Sigmoid colon (tissue), 7 donors: ENCODE measurements at regions of chr15 and their contacts with region 1.

Region 1: DNA sequence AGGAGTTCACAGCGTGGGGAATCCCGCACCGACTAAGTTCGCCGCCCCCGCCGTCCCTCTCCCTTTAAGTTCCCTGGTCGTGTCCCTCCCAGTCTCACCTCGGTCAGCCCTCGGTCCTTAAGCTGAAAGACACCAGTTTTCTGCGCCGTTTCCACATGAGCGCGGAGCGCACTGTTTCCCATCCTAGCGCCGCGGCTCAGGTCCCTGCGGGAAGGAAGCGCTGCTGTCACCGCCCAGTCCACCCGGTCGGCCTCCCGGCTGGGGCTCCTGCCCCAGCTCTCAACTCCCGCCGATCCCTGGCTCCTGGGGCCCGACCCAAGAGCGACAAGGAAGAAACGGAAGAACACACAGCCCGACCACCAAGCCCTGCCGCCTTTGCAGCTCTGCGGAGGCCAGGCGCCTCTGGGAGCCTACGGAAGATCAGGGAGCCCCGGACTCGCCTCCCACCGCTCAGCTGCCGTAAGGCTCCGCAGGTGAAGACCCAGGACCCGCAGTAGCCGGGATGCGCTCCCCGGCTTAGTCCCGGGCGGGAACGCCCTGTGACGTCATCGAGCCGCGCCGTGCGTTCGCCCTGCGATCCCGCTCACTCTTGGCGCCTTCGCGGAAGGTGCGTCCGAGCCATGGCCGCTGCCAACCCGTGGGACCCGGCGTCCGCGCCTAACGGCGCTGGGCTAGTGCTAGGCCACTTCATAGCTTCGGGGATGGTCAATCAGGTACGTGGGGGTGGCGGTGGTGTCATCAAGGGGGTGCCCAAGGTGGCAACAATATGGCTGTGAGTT is at the starts of genes HAUS2 and LRRC57:
- DNase-seq: peak; percentile 93
- H3K4me3 ChIP-seq: peak within 1 kb of the TSS; percentile 72 to 94 (median 80)
- H3K27ac ChIP-seq: peak within 1 kb of the TSS; percentile 89 to 97 (median 92)
- H3K4me1 ChIP-seq: peaks cover 0 to 26% (median 24%) of the 10 kb centered on the region in 4 donors
- H3K27me3 ChIP-seq: no peaks in the 10 kb centered on the region
- CTCF ChIP-seq: no peak
- EP300 ChIP-seq: no peak
- POLR2A ChIP-seq: peak; percentile 84 to 91
- total RNA-seq, gene HAUS2: 18.3 to 24.6 (median 20.1) TPM
- total RNA-seq, gene LRRC57: 9.2 to 24.6 (median 11.4) TPM

Region 2: DNA sequence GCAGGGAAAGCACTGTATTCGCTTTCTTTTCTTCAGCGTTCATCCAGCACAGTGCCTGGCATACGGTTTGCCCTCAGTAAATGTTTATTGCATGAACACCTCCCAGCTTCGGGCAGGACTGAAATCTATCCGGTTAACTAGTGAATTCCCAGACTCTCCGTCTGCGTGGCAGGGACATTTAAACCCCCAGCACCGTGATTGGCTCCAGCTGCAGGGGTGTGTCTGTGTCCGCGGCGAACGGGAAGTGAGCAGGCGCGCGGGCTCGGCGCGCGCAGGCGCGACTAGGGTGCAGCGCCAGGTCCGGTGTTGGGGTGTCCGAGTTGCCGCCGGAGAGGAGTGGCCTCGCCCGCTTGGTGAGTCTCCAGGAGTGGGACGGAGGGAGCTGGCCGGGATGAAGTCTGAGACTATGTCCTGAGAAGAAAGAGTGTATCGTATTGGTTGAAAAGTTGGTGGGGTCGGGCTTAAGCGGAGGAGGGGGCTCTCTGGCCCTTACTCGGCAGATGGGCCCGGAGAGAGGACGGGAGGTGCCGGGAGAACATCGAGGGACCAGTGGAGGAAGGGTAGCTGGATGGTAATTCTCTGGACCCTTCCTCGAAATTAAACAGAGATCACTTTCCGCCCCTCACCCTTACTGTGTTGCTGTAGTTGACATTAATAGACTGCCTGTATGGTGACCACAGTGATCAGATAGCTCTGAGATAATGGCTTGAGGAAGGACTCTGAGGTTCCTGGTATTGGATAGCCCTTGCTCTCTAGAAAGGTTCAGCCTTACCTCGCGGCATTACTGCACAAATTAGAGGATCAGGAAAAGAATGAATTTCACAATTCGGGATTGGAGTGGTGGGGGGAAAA is 52.9 kb before region 1 on chr15 and contains the start of gene SNAP23:
- intact Hi-C with region 1: loop called (anchors 5 kb)
- DNase-seq: peak; percentile 98
- H3K4me3 ChIP-seq: peak within 1 kb of the TSS; percentile 54 to 89 (median 61)
- H3K27ac ChIP-seq: peak within 1 kb of the TSS; percentile 84 to 95 (median 88)
- H3K4me1 ChIP-seq: peaks cover 0 to 53% (median 41%) of the 10 kb centered on the region in 4 donors
- H3K27me3 ChIP-seq: no peaks in the 10 kb centered on the region
- CTCF ChIP-seq: no peak
- EP300 ChIP-seq: no peak
- POLR2A ChIP-seq: peak; percentile 82 to 90
- total RNA-seq, gene SNAP23: 43.8 to 67.4 (median 57.9) TPM

Region 3: GRCh38 chr15:42581272-42581730 is 32.9 kb after region 1 on chr15:
- intact Hi-C with region 1: loop called (anchors 5 kb)
- DNase-seq: peak; percentile 95
- H3K4me3 ChIP-seq: peak overlapping the region; percentile 27 to 48 (median 46)
- H3K27ac ChIP-seq: peak overlapping the region; percentile 82 to 84 (median 82)
- H3K4me1 ChIP-seq: peaks cover 0 to 83% (median 70%) of the 10 kb centered on the region in 4 donors
- H3K27me3 ChIP-seq: no peaks in the 10 kb centered on the region
- CTCF ChIP-seq: no peak
- EP300 ChIP-seq: no peak
- POLR2A ChIP-seq: no peak

Region 4: DNA sequence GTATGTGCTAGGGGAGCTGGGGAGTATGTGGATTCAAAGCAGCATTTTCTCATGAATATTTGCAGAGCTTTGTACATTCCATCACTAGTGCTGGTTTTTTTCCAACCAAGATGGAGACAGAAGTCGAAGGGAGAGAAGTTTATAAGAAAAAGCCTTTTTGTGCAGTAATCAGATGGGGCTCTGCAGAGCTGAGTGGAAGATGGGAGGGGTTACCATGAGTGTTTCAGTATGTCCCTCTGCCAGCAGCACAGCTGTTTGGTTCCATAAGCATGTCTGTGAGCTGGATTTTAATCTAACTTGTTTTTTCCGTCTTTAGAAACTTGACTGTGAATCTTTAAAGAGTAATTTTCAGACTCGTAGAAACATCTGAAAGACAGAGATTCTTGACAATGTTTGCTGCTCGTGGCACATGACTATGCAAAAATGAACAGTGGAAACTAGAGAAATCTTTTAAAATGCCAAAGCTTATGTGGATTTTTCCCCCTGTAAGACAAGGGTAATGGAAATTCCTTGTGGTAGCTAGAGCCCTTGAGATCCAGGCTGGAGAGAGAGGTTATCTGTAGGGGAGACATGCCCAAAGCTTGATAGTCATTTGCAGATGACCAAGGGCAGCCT is 47.3 kb after region 1 on chr15:
- intact Hi-C with region 1: no loop called
- DNase-seq: no peak
- H3K4me3 ChIP-seq: no peak overlapping the region
- H3K27ac ChIP-seq: peak overlapping the region; percentile 64 to 82 (median 72)
- H3K4me1 ChIP-seq: peaks cover 0 to 84% (median 60%) of the 10 kb centered on the region in 4 donors
- H3K27me3 ChIP-seq: no peaks in the 10 kb centered on the region
- CTCF ChIP-seq: no peak
- EP300 ChIP-seq: no peak
- POLR2A ChIP-seq: no peak

Region 5: DNA sequence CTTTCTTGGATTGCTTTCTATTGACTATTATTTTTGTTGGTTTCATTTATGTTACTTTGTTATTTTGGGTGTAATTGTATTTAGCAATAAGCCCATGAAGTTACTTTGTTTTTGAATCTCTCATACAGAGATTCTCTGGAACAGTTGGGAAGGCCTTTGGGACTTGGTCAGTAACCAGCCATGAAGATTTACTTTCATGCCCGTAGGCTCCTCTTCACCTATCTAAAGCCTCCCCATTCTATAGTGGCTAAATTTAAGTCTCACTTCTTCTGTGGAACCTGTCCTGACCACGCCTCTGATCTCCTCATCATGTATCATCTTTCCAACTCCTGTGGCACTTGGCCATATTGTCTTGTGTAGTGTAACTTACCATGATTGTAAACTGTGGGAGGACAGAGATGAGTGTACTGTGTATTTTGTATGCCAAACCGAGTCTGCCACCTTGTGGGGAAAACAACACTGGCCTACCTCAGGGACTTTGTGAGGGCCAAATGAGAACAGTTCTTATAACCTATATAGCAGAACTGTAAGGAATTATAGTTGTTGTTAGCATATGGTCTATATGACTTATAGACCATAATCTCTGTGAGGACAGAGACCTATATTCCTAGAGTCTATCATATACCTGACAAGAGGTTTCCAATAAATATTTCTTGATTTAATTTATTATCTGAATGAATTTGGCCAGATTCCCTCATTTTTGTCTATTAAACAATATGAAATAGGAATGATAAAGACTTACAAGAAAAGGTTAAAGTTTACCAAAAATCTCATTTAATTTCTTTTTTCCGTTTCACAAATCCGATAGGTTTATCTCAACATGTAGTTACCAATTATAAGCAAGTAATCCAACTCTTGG is 102.0 kb after region 1 on chr15:
- intact Hi-C with region 1: loop called (anchors 2 kb)
- DNase-seq: peak; percentile 77
- H3K4me3 ChIP-seq: no peak overlapping the region
- H3K27ac ChIP-seq: peak overlapping the region in 2 of 4 donors; percentile 6 to 41
- H3K4me1 ChIP-seq: peaks cover 0 to 8% (median 5%) of the 10 kb centered on the region in 4 donors
- H3K27me3 ChIP-seq: no peaks in the 10 kb centered on the region
- CTCF ChIP-seq: peak; percentile 70 to 83 (median 74)
- EP300 ChIP-seq: no peak
- POLR2A ChIP-seq: no peak